Calu3 (cell line): ENCODE measurements at regions of chrX and their contacts with region 1.

Region 1: GRCh38 chrX:1673337-1673736 is 58.5 kb downstream of the ASMT start:
- DNase-seq: peak; percentile 44
- H3K4me3 Mint-ChIP-seq: no peak overlapping the region
- H3K27ac Mint-ChIP-seq: no peak overlapping the region
- H3K4me1 Mint-ChIP-seq: no peaks in the 10 kb centered on the region
- H3K27me3 Mint-ChIP-seq: no peaks in the 10 kb centered on the region
- CTCF ChIP-seq: peak; percentile 44

Region 2: DNA sequence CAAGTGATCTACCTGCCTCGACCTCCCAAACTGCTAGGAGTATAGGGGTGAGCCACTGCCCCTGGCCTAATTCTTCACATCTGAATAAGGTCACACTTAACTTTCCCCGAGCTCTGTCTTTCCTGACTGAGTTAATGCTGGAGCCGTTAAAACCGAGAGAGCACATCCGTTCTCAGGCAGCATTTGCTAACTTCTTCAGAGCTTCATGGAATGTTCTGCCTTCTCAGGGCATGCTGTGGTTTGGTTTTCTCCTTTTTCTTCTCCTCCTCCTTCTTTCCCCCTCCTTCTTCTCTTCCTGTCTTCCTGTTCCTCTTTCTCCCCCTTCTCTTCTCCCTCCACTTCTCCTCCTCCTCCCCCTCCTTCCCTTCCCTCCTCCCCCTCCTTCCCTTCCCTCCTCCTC is 61.5 kb after region 1 on chrX:
- CTCF ChIA-PET with region 1: no interaction called
- intact Hi-C with region 1: no loop called
- DNase-seq: no peak
- H3K4me3 Mint-ChIP-seq: no peak overlapping the region
- H3K27ac Mint-ChIP-seq: no peak overlapping the region
- H3K4me1 Mint-ChIP-seq: no peaks in the 10 kb centered on the region
- H3K27me3 Mint-ChIP-seq: no peaks in the 10 kb centered on the region
- CTCF ChIP-seq: no peak

Region 3: GRCh38 chrX:2589186-2590030 is 916.1 kb after region 1 on chrX:
- CTCF ChIA-PET with region 1: no interaction called
- intact Hi-C with region 1: loop called (anchors 5 kb)
- DNase-seq: no peak
- H3K4me3 Mint-ChIP-seq: no peak overlapping the region
- H3K27ac Mint-ChIP-seq: no peak overlapping the region
- H3K4me1 Mint-ChIP-seq: peaks cover 10% of the 10 kb centered on the region
- H3K27me3 Mint-ChIP-seq: peaks cover 9% of the 10 kb centered on the region
- CTCF ChIP-seq: no peak